A673 (cell line): ENCODE measurements at regions of chr2 and their contacts with region 1.

Region 1: DNA sequence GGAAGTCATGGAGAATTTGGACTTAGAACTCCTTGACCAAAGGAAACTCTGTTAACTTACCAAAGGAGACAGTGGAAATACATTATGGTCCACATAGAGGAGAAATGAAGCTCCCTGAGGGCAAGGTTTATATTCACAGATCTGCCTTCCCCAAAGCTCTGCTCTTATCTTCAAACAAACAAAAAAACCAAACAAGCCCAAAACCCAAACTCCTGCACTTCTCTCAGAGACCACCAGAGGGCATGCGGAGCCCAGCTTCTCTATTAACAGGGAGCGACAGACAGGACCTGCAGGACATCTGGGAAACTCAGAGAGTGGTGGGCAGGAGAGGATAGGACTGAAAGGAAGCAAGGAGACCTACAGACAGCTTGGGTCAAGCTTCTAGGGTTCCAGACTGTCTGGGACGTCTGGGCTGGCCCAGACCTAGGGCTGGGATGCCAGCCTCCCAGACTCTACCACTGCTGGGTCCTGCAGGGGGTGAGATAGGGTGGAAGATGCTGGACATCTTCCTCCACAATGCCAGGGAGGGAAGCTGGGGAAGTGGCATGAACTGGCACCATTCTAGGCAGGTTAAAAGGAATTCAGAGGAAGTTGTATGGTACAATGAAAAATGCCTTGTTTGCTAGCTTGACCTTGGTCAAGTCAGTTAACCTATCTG is 4.0 kb upstream of the WNT10A start:
- DNase-seq: peak; percentile 82
- H3K4me3 ChIP-seq: no peak overlapping the region
- H3K27ac ChIP-seq: no peak overlapping the region
- H3K4me1 ChIP-seq: peaks cover 19% of the 10 kb centered on the region
- H3K27me3 ChIP-seq: peaks cover 50% of the 10 kb centered on the region
- CTCF ChIP-seq: peak; percentile 96

Region 2: GRCh38 chr2:218418717-218419458 is 457.8 kb before region 1 on chr2 and contains the start of gene VIL1:
- CTCF ChIA-PET with region 1: no interaction called
- POLR2A ChIA-PET with region 1: no interaction called
- intact Hi-C with region 1: no loop called
- DNase-seq: no peak
- H3K4me3 ChIP-seq: no peak within 1 kb of the TSS
- H3K27ac ChIP-seq: no peak within 1 kb of the TSS
- H3K4me1 ChIP-seq: no peaks in the 10 kb centered on the region
- H3K27me3 ChIP-seq: no peaks in the 10 kb centered on the region
- CTCF ChIP-seq: no peak
- total RNA-seq, gene VIL1: not detected in 2 replicates

Region 3: GRCh38 chr2:218860950-218861381 is 15.7 kb before region 1 on chr2:
- CTCF ChIA-PET with region 1: interaction called, 13 read pairs
- POLR2A ChIA-PET with region 1: no interaction called
- intact Hi-C with region 1: no loop called
- DNase-seq: peak; percentile 97
- H3K4me3 ChIP-seq: no peak overlapping the region
- H3K27ac ChIP-seq: no peak overlapping the region
- H3K4me1 ChIP-seq: peaks cover 12% of the 10 kb centered on the region
- H3K27me3 ChIP-seq: peaks cover 23% of the 10 kb centered on the region
- CTCF ChIP-seq: no peak

Region 4: DNA sequence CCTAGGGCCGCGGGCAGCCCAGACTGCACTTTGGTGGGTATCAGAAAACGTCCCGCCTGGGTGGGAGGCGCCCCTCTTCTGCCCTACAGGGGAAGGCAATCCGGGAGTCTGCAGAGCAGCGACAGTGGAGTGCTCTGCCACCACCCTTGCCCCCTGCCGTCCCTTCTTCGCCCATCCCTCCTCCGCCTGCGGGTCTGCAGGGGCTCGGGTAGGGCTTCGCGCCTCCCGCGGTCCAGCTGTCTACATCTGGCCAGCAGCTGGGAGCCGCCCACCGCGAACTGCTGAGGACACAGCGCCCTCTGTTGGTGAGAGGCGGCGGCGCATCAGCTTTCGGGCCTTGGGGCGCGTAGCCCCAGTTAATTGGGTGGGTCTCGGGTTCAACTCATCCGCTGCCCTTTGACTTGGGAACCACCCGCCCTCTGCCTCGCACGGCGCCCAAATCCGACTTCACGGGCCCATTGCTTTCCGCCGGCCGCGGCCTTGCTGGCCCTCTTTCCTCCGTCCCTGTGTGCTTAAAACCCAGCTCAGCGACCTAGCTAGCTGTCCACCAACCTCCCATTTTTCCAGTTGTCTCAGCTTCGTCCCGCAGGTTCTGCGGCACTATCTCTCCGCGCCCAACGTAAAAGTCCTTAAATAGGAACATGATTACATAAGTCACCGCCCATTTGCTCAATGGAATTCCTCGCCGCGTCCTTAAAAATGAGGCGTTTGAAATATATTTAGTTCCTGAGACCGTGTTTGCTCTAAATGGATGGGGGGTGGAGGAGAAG is 21.6 kb after region 1 on chr2:
- CTCF ChIA-PET with region 1: interaction called, 54 read pairs
- POLR2A ChIA-PET with region 1: no interaction called
- intact Hi-C with region 1: loop called (anchors 1 kb)
- DNase-seq: peak; percentile 73
- H3K4me3 ChIP-seq: no peak overlapping the region
- H3K27ac ChIP-seq: no peak overlapping the region
- H3K4me1 ChIP-seq: peaks cover 22% of the 10 kb centered on the region
- H3K27me3 ChIP-seq: peaks cover 38% of the 10 kb centered on the region
- CTCF ChIP-seq: peak; percentile 98

Region 5: GRCh38 chr2:219119422-219120043 is 242.8 kb after region 1 on chr2:
- CTCF ChIA-PET with region 1: no interaction called
- POLR2A ChIA-PET with region 1: no interaction called
- intact Hi-C with region 1: loop called (anchors 10 kb)
- DNase-seq: peak; percentile 72
- H3K4me3 ChIP-seq: no peak overlapping the region
- H3K27ac ChIP-seq: no peak overlapping the region
- H3K4me1 ChIP-seq: peaks cover 21% of the 10 kb centered on the region
- H3K27me3 ChIP-seq: no peaks in the 10 kb centered on the region
- CTCF ChIP-seq: peak; percentile 89